B cell (primary cell): ENCODE measurements at regions of chr4 and their contacts with region 1.

Region 1: GRCh38 chr4:102055805-102056204 is 265.3 kb downstream of the BANK1 start:
- DNase-seq: no peak
- ATAC-seq: no peak
- H3K4me3 ChIP-seq: no peak overlapping the region
- H3K4me3 Mint-ChIP-seq: no peak overlapping the region
- H3K27ac ChIP-seq: no peak overlapping the region
- H3K27ac Mint-ChIP-seq: peak overlapping the region; percentile 29
- H3K4me1 ChIP-seq: no peaks in the 10 kb centered on the region
- H3K4me1 Mint-ChIP-seq: peaks cover 21% of the 10 kb centered on the region
- H3K27me3 ChIP-seq: no peaks in the 10 kb centered on the region
- H3K27me3 Mint-ChIP-seq: no peaks in the 10 kb centered on the region
- CTCF ChIP-seq: no peak

Region 2: GRCh38 chr4:101993002-101993841 is 62.6 kb before region 1 on chr4:
- CTCF ChIA-PET with region 1: no interaction called
- POLR2A ChIA-PET with region 1: no interaction called
- intact Hi-C with region 1: no loop called
- DNase-seq: peak; percentile 27
- ATAC-seq: peak; percentile 51
- H3K4me3 ChIP-seq: no peak overlapping the region
- H3K4me3 Mint-ChIP-seq: peak overlapping the region; percentile 63
- H3K27ac ChIP-seq: peak overlapping the region; percentile 30 to 61
- H3K27ac Mint-ChIP-seq: peak overlapping the region; percentile 84
- H3K4me1 ChIP-seq: peaks cover 53 to 72% of the 10 kb centered on the region in 2 donors
- H3K4me1 Mint-ChIP-seq: peaks cover 91% of the 10 kb centered on the region
- H3K27me3 ChIP-seq: no peaks in the 10 kb centered on the region
- H3K27me3 Mint-ChIP-seq: no peaks in the 10 kb centered on the region
- CTCF ChIP-seq: no peak

Region 3: GRCh38 chr4:102022343-102022742 is 33.5 kb before region 1 on chr4:
- CTCF ChIA-PET with region 1: no interaction called
- POLR2A ChIA-PET with region 1: no interaction called
- intact Hi-C with region 1: loop called (anchors 5 kb)
- DNase-seq: no peak
- ATAC-seq: no peak
- H3K4me3 ChIP-seq: no peak overlapping the region
- H3K4me3 Mint-ChIP-seq: no peak overlapping the region
- H3K27ac ChIP-seq: peak overlapping the region in 1 of 2 donors; percentile 50
- H3K27ac Mint-ChIP-seq: peak overlapping the region; percentile 57
- H3K4me1 ChIP-seq: no peaks in the 10 kb centered on the region
- H3K4me1 Mint-ChIP-seq: peaks cover 4% of the 10 kb centered on the region
- H3K27me3 ChIP-seq: no peaks in the 10 kb centered on the region
- H3K27me3 Mint-ChIP-seq: no peaks in the 10 kb centered on the region
- CTCF ChIP-seq: no peak

Region 4: GRCh38 chr4:102036619-102037376 is 19.0 kb before region 1 on chr4:
- CTCF ChIA-PET with region 1: interaction called, 3 read pairs
- POLR2A ChIA-PET with region 1: no interaction called
- intact Hi-C with region 1: loop called (anchors 2 kb)
- DNase-seq: no peak
- ATAC-seq: no peak
- H3K4me3 ChIP-seq: no peak overlapping the region
- H3K4me3 Mint-ChIP-seq: no peak overlapping the region
- H3K27ac ChIP-seq: peak overlapping the region in 1 of 2 donors; percentile 12
- H3K27ac Mint-ChIP-seq: peak overlapping the region; percentile 74
- H3K4me1 ChIP-seq: no peaks in the 10 kb centered on the region
- H3K4me1 Mint-ChIP-seq: peaks cover 34% of the 10 kb centered on the region
- H3K27me3 ChIP-seq: no peaks in the 10 kb centered on the region
- H3K27me3 Mint-ChIP-seq: no peaks in the 10 kb centered on the region
- CTCF ChIP-seq: no peak

Region 5: GRCh38 chr4:102114123-102114630 is 58.4 kb after region 1 on chr4:
- CTCF ChIA-PET with region 1: no interaction called
- POLR2A ChIA-PET with region 1: no interaction called
- intact Hi-C with region 1: no loop called
- DNase-seq: no peak
- ATAC-seq: no peak
- H3K4me3 ChIP-seq: no peak overlapping the region
- H3K4me3 Mint-ChIP-seq: no peak overlapping the region
- H3K27ac ChIP-seq: no peak overlapping the region
- H3K27ac Mint-ChIP-seq: no peak overlapping the region
- H3K4me1 ChIP-seq: no peaks in the 10 kb centered on the region
- H3K4me1 Mint-ChIP-seq: no peaks in the 10 kb centered on the region
- H3K27me3 ChIP-seq: no peaks in the 10 kb centered on the region
- H3K27me3 Mint-ChIP-seq: no peaks in the 10 kb centered on the region
- CTCF ChIP-seq: no peak